Activated CD4-positive, alpha-beta T cell treated with anti-CD3 and anti-CD28 coated beads for 36 hours (primary cell): ENCODE measurements at regions of chr5 and their contacts with region 1.

Region 1: DNA sequence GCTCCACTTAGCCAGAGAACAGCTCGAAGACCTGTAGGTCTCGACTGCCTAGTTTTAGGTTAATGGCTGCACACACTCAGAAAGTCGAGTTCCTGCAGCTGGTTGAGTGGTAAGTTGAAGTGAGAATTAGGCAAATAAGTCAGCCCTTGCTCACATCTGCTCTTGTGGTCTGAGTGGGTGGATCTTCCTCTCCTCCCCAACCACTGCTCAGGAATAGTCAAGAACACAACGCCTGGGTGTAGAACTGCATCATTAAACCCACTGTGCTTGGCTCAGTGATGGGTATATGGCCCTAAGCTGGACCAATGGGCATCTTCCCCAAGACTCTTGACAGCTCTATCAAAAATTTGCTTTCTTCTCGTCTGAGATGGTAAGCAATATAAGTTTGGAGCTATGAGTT is 20.9 kb upstream of the ADAM19 start:
- DNase-seq: peak; percentile 78
- ATAC-seq: peak; percentile 69
- H3K4me3 Mint-ChIP-seq: peak overlapping the region; percentile 22
- H3K27ac Mint-ChIP-seq: peak overlapping the region; percentile 90
- H3K4me1 Mint-ChIP-seq: peaks cover 96% of the 10 kb centered on the region
- H3K27me3 Mint-ChIP-seq: no peaks in the 10 kb centered on the region

Region 2: DNA sequence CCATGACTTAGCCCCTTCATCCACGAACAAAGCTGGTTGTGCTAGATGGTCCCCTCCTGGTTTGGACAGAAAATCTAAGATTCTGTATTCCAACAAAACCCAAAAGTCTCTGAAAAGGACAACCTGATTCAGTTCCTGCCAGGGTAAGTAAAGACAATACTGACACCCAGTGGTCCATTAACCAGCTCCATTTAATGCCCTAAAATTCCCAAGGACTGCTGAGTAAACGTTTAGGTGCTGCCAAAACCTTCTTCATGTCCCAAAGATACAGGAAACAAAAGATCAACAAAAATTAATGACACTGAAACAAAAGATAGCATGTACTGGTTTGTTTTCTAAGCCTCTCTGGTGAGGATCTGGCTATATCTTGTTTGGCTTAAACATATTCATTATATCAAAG is 771.7 kb before region 1 on chr5:
- CTCF ChIA-PET with region 1: no interaction called
- POLR2A ChIA-PET with region 1: no interaction called
- intact Hi-C with region 1: loop called in 1 of 2 experiments (anchors 5 kb)
- DNase-seq: no peak
- ATAC-seq: no peak
- H3K4me3 Mint-ChIP-seq: no peak overlapping the region
- H3K27ac Mint-ChIP-seq: no peak overlapping the region
- H3K4me1 Mint-ChIP-seq: no peaks in the 10 kb centered on the region
- H3K27me3 Mint-ChIP-seq: peaks cover 5% of the 10 kb centered on the region

Region 3: DNA sequence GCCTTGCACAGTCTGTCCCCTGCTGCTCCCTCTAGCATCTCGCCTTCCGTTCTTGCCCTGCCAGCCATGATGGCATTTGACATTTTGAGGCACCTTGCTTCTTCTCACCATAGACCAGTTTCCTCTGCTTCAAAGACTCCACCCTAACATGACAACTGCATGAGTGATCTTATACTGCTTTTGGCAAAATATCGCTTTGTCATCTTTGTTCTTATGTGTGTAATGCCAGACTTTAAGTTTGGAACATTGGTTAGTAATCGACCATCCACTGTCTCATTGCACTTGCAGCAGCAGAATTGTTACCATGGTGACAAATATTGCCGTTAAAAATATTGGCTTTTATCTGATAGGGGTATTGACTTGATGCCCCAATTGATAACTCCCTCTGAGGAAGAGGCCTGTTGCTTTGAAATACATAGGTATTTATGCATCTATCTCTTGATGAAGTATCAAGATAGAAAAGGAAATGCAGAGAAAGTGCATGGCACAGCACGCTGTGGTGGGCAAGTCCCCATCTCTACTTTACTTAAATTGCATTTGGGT is 437.2 kb before region 1 on chr5:
- CTCF ChIA-PET with region 1: no interaction called
- POLR2A ChIA-PET with region 1: no interaction called
- intact Hi-C with region 1: loop called in 1 of 2 experiments (anchors 10 kb)
- DNase-seq: peak; percentile 66
- ATAC-seq: peak; percentile 81
- H3K4me3 Mint-ChIP-seq: peak overlapping the region; percentile 64
- H3K27ac Mint-ChIP-seq: peak overlapping the region; percentile 99
- H3K4me1 Mint-ChIP-seq: peaks cover 71% of the 10 kb centered on the region
- H3K27me3 Mint-ChIP-seq: no peaks in the 10 kb centered on the region

Region 4: DNA sequence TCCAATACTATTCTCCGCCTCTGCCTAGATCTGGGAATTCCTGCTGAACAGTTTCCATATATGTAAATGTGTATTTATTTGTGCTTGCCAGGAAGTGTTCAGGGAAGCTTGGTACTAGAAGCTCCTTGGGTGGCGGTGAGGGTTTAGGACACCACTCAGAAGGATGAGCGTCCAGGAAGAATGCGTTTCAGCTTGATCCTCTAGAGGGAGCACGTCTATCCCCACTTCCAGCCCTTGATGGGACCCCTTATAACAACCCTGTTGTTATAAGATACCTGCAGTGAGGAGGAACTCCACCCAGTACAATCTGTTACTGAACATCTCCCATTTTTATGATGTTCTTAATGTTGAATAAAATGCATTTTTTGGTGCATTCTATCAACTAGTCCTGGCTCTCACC is 241.7 kb before region 1 on chr5:
- CTCF ChIA-PET with region 1: interaction called, 4 read pairs
- POLR2A ChIA-PET with region 1: no interaction called
- intact Hi-C with region 1: loop called in 1 of 2 experiments (anchors 5 kb)
- DNase-seq: no peak
- ATAC-seq: no peak
- H3K4me3 Mint-ChIP-seq: no peak overlapping the region
- H3K27ac Mint-ChIP-seq: peak overlapping the region; percentile 22
- H3K4me1 Mint-ChIP-seq: peaks cover 53% of the 10 kb centered on the region
- H3K27me3 Mint-ChIP-seq: no peaks in the 10 kb centered on the region

Region 5: GRCh38 chr5:157540707-157541446 is 55.6 kb before region 1 on chr5:
- CTCF ChIA-PET with region 1: interaction called, 5 read pairs
- POLR2A ChIA-PET with region 1: no interaction called
- intact Hi-C with region 1: loop called in 1 of 2 experiments (anchors 1 kb)
- DNase-seq: peak; percentile 68
- ATAC-seq: peak; percentile 85
- H3K4me3 Mint-ChIP-seq: peak overlapping the region; percentile 21
- H3K27ac Mint-ChIP-seq: peak overlapping the region; percentile 79
- H3K4me1 Mint-ChIP-seq: peaks cover 73% of the 10 kb centered on the region
- H3K27me3 Mint-ChIP-seq: no peaks in the 10 kb centered on the region

Region 6: GRCh38 chr5:157582731-157583620 is 13.5 kb before region 1 on chr5:
- CTCF ChIA-PET with region 1: interaction called, 7 read pairs
- POLR2A ChIA-PET with region 1: interaction called, 3 read pairs
- intact Hi-C with region 1: loop called (anchors 1 kb)
- DNase-seq: peak; percentile 31
- ATAC-seq: peak; percentile 89
- H3K4me3 Mint-ChIP-seq: no peak overlapping the region
- H3K27ac Mint-ChIP-seq: peak overlapping the region; percentile 73
- H3K4me1 Mint-ChIP-seq: peaks cover 43% of the 10 kb centered on the region
- H3K27me3 Mint-ChIP-seq: no peaks in the 10 kb centered on the region

Region 7: GRCh38 chr5:157731272-157732129 is 135.0 kb after region 1 on chr5 and contains the start of gene THG1L:
- CTCF ChIA-PET with region 1: interaction called, 6 read pairs
- POLR2A ChIA-PET with region 1: interaction called, 12 read pairs
- intact Hi-C with region 1: loop called in 1 of 2 experiments (anchors 5 kb)
- DNase-seq: peak; percentile 99
- ATAC-seq: peak; percentile 95
- H3K4me3 Mint-ChIP-seq: peak within 1 kb of the TSS; percentile 86
- H3K27ac Mint-ChIP-seq: peak within 1 kb of the TSS; percentile 96
- H3K4me1 Mint-ChIP-seq: peaks cover 27% of the 10 kb centered on the region
- H3K27me3 Mint-ChIP-seq: no peaks in the 10 kb centered on the region
- total RNA-seq, gene THG1L: 29.9 to 33.8 TPM